AG04449 (cell line): ENCODE measurements at regions of chr10 and their contacts with region 1.

Region 1: GRCh38 chr10:91590142-91590903 is 42.5 kb downstream of the PPP1R3C start:
- DNase-seq: no peak
- H3K4me3 ChIP-seq: 0 out of 2 replicates have a peak overlapping the region, but pooled peaks have one; percentile 9
- CTCF ChIP-seq: no peak

Region 2: DNA sequence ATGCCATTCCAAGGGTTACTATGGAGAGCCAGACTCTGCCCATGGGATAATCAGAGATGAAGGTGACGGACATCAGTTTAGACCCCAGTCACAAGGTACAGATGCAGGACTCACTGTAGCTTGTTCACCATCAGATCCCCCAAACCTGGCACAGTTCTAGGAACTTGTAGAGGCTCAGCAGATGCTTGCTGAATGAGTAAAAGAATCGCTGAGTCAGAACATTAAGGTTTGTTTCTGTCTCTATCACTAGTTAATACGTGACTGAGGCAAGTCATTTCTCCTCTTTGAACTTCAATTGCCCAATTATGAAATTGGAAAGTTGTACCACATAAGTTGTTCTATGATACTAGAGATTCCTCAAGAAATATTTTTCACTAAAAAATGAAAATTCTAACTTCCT is 22.5 kb before region 1 on chr10:
- CTCF ChIA-PET with region 1: no interaction called
- POLR2A ChIA-PET with region 1: no interaction called
- DNase-seq: no peak
- H3K4me3 ChIP-seq: no peak overlapping the region
- CTCF ChIP-seq: no peak

Region 3: GRCh38 chr10:91579329-91579985 is 10.9 kb before region 1 on chr10:
- CTCF ChIA-PET with region 1: interaction called, 4 read pairs
- POLR2A ChIA-PET with region 1: interaction called, 14 read pairs
- DNase-seq: no peak
- H3K4me3 ChIP-seq: no peak overlapping the region
- CTCF ChIP-seq: no peak